ENCODE measurements at regions of chr12 and their contacts with region 1.

Region 1: GRCh38 chr12:5171701-5172100 is 128.0 kb downstream of the KCNA5 start:
- DNase-seq: peak; percentile 77
- ATAC-seq: peak; percentile 34
- H3K4me3 ChIP-seq: no peak overlapping the region
- H3K27ac ChIP-seq: no peak overlapping the region
- H3K4me1 ChIP-seq: peaks cover 23% of the 10 kb centered on the region
- H3K27me3 ChIP-seq: no peaks in the 10 kb centered on the region
- CTCF ChIP-seq: peak; percentile 82
- POLR2A ChIP-seq: no peak
- RAD21 ChIP-seq: peak; percentile 87

Region 2: GRCh38 chr12:5096241-5096935 is 75.3 kb before region 1 on chr12:
- CTCF ChIA-PET with region 1: no interaction called
- POLR2A ChIA-PET with region 1: no interaction called
- dilution Hi-C with region 1: no loop called
- in situ Hi-C with region 1: no loop called
- intact Hi-C with region 1: loop called (anchors 5 kb)
- DNase-seq: peak; percentile 92
- ATAC-seq: peak; percentile 87
- H3K4me3 ChIP-seq: no peak overlapping the region
- H3K27ac ChIP-seq: peak overlapping the region; percentile 8; the same call in 1 of the 2 replicates
- H3K4me1 ChIP-seq: peaks cover 21% of the 10 kb centered on the region
- H3K27me3 ChIP-seq: no peaks in the 10 kb centered on the region
- CTCF ChIP-seq: peak; percentile 53
- POLR2A ChIP-seq: no peak
- RAD21 ChIP-seq: peak; percentile 68

Region 3: GRCh38 chr12:5442251-5443006 is 270.7 kb after region 1 on chr12:
- CTCF ChIA-PET with region 1: no interaction called
- POLR2A ChIA-PET with region 1: no interaction called
- dilution Hi-C with region 1: no loop called
- in situ Hi-C with region 1: no loop called
- intact Hi-C with region 1: loop called (anchors 2 kb)
- DNase-seq: peak; percentile 73
- ATAC-seq: peak; percentile 78
- H3K4me3 ChIP-seq: no peak overlapping the region
- H3K27ac ChIP-seq: peak overlapping the region; percentile 30; the same call in 1 of the 2 replicates
- H3K4me1 ChIP-seq: peaks cover 30% of the 10 kb centered on the region
- H3K27me3 ChIP-seq: no peaks in the 10 kb centered on the region
- CTCF ChIP-seq: peak; percentile 77
- POLR2A ChIP-seq: no peak
- RAD21 ChIP-seq: peak; percentile 81

Region 4: DNA sequence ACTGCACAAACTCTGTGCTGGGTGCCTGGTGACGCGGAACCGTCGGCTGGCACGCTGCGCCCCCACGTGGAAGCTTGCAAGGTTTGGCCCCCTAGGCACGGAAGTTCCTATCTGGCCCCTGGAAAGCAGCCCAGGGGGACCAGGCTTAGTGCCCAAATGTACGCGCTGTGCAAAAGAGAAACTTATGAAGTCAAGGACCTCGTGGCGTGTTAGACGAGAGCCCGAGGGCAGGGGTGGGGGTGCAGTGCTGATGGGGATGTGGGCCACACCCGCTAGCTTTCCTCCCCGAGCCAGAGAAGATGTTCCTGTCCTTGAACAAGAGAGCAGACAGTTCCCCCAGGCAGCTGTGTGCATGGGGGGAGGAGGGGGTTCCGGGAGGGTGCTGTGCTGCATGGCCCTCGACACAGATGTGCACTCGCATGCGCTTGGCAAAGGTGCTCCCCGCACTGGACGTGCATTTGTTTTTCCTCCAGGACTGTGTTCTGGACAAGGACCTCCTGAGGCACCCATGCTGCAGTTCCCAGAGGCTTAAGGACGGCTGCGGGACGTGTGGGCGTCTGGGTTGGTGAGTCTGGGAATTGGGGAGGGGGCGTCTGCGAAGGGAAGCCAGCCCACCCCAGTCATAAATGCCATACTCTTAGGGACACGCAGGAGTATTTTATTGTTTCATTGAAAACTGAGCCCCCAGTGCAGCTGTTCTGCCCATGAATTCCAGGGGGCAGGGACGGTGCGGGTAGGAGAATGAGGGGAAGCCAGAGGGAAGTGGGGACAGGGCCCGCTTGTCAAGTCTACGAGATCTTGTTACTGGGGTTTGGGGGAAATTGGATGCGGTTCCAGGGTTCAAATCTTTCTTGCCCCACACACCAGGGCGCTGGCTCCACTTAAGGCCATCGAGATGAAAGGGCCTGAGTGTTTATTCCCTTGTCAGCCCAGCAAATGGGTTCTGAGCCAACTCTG is 340.2 kb after region 1 on chr12:
- CTCF ChIA-PET with region 1: no interaction called
- POLR2A ChIA-PET with region 1: no interaction called
- dilution Hi-C with region 1: no loop called
- in situ Hi-C with region 1: no loop called
- intact Hi-C with region 1: loop called (anchors 5 kb)
- DNase-seq: peak; percentile 44
- ATAC-seq: peak; percentile 79
- H3K4me3 ChIP-seq: no peak overlapping the region
- H3K27ac ChIP-seq: no peak overlapping the region
- H3K4me1 ChIP-seq: peaks cover 5% of the 10 kb centered on the region
- H3K27me3 ChIP-seq: no peaks in the 10 kb centered on the region
- CTCF ChIP-seq: peak; percentile 72
- POLR2A ChIP-seq: no peak
- RAD21 ChIP-seq: peak; percentile 79

Region 5: GRCh38 chr12:5796171-5796958 is 624.7 kb after region 1 on chr12:
- CTCF ChIA-PET with region 1: no interaction called
- POLR2A ChIA-PET with region 1: no interaction called
- dilution Hi-C with region 1: no loop called
- in situ Hi-C with region 1: no loop called
- intact Hi-C with region 1: loop called (anchors 5 kb)
- DNase-seq: peak; percentile 30
- ATAC-seq: peak; percentile 86
- H3K4me3 ChIP-seq: no peak overlapping the region
- H3K27ac ChIP-seq: no peak overlapping the region
- H3K4me1 ChIP-seq: no peaks in the 10 kb centered on the region
- H3K27me3 ChIP-seq: peaks cover 35% of the 10 kb centered on the region
- CTCF ChIP-seq: peak; percentile 72
- POLR2A ChIP-seq: no peak
- RAD21 ChIP-seq: peak; percentile 91

Measured in IMR-90 (cell line).